Esophagus muscularis mucosa (tissue), 4 donors: ENCODE measurements at regions of chr14 and their contacts with region 1.

Region 1: DNA sequence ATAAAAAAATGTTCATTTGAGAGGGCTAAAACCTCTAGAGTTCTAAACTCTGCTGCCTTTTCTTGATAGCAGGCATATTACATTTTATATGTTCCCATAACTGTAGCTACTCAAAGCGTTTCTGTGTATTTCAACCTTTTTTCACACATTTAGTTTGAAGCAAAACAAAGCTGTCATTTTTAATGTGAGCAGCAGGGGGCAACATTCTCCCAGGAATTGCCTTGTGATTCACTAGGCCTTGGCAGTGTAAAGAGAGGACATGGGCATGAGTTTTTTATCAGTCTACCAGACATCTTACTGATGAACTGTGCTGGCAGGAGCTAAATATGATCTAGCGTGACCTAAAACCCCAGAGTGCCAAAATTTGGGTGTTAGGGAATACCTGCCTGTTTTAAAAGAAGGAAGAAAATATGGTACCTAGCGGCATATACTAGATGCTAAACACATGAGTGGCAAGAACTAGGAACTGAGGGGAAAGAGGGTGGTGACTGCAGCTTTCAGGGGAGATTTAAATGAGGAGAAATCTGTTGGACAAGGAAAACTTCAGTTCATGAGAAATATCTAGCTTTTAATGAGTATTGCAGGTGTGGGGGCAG is 65.3 kb downstream of the IFT43 start:
- DNase-seq: no peak
- H3K4me3 ChIP-seq: no peak overlapping the region
- H3K27ac ChIP-seq: no peak overlapping the region
- H3K4me1 ChIP-seq: peaks cover 0 to 8% (median 3%) of the 10 kb centered on the region in 4 donors
- H3K27me3 ChIP-seq: no peaks in the 10 kb centered on the region
- CTCF ChIP-seq: peak; percentile 72 to 79 (median 73)
- EP300 ChIP-seq: no peak
- POLR2A ChIP-seq: no peak

Region 2: DNA sequence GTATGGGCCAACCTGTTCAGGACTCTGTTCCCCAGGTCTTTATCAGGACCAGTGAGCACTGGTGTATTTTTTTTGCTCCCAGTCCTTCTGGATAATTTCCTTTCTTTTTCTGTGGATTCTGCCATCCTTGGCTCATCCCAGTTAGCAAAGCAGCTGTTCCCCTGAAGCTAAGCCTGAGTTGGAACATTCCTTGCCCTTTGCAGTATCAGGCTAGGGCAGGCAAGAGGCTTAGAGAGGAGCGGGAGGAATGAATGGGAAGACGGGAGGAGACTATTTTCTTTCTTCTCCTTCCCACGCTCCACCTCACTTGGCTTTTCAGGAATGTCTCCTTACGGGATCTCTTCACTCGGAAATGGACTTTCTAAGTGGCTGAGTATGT is 419.5 kb before region 1 on chr14:
- intact Hi-C with region 1: no loop called
- DNase-seq: no peak
- H3K4me3 ChIP-seq: no peak overlapping the region
- H3K27ac ChIP-seq: no peak overlapping the region
- H3K4me1 ChIP-seq: no peaks in the 10 kb centered on the region
- H3K27me3 ChIP-seq: no peaks in the 10 kb centered on the region
- CTCF ChIP-seq: no peak
- EP300 ChIP-seq: no peak
- POLR2A ChIP-seq: no peak

Region 3: DNA sequence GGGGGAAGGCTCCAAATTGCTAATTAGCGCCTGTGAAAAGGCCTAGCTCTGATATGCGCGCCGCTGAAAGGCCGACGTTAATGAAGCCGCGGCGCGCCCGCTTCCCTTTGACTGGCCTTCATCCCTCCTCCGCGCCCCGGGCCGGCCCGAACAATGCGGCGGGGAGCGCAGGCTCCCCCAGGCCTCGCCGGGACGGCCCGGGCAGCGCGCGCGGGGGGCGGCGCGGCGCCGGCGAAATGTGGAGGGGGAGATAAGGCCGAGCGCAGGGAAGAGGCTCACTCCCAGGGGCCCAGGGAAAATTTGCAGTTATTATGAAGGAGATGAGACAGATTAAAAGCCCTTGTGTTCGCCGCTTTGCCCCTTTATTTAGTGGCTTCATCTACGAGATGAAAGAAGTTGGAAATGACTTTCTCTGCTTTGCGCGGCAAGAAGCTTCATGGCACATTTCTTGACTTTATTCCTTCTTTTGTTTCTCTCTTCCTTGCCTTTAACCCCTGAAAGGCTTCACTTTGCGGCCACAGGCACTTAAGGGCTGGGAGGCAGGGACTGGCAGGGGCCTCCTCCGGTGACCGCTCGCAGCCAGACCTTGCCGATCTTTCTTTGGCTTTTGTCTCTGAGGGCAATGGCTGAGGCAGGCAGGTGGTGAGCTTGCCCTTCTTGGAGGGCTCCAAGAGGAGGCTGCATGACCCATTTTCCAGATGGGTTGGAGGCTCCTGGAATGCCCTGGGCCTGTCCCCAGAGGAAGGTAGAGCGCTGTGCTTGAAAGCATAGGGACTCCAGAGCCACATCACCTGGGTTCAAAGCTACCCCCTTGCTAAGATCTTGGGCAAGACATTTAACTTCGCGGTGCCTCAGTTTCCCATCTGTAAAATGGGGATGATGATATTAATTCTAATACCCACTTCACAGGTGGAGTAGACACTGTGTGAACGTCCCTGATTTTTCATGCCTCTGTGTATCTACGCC is 88.1 kb after region 1 on chr14:
- intact Hi-C with region 1: no loop called
- DNase-seq: no peak
- H3K4me3 ChIP-seq: peak overlapping the region; percentile 47 to 51 (median 48)
- H3K27ac ChIP-seq: no peak overlapping the region
- H3K4me1 ChIP-seq: peaks cover 3 to 15% (median 13%) of the 10 kb centered on the region in 4 donors
- H3K27me3 ChIP-seq: peaks cover 0 to 56% (median 8%) of the 10 kb centered on the region in 4 donors
- CTCF ChIP-seq: no peak
- EP300 ChIP-seq: no peak
- POLR2A ChIP-seq: no peak

Region 4: GRCh38 chr14:76169776-76170175 is 118.9 kb after region 1 on chr14:
- intact Hi-C with region 1: loop called (anchors 10 kb)
- DNase-seq: no peak
- H3K4me3 ChIP-seq: no peak overlapping the region
- H3K27ac ChIP-seq: no peak overlapping the region
- H3K4me1 ChIP-seq: peaks cover 4 to 25% (median 16%) of the 10 kb centered on the region in 4 donors
- H3K27me3 ChIP-seq: no peaks in the 10 kb centered on the region
- CTCF ChIP-seq: no peak
- EP300 ChIP-seq: no peak
- POLR2A ChIP-seq: no peak

Region 5: DNA sequence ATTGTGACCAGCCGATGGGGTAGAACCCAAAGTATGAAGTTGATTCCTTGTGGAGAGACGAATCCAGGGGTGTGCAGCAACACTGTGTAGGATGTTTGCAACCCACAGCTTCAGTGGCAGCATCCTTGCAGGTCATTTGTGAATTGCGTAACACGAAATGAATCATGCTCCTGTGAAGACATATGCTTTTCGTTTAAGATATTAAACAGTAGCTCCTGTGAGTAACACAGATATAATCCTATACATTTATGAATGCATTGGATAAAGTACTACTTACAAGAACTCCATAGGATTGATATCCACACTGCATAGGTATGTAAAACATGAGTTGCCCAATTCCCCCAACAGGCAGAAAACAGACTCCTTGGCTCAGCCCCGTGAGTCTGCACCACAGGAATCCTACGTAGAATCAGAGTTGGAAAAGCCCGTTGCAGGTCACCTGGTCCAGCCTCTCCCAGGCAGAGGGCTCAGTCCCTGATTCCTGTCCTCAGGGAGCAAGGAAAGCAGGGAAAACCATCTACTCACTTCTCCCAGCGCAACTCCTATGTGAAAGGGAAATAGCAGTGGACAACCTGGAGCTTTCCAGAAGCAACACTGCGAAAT is 176.7 kb after region 1 on chr14:
- intact Hi-C with region 1: no loop called
- DNase-seq: no peak
- H3K4me3 ChIP-seq: no peak overlapping the region
- H3K27ac ChIP-seq: no peak overlapping the region
- H3K4me1 ChIP-seq: no peaks in the 10 kb centered on the region
- H3K27me3 ChIP-seq: no peaks in the 10 kb centered on the region
- CTCF ChIP-seq: no peak
- EP300 ChIP-seq: no peak
- POLR2A ChIP-seq: no peak

Region 6: GRCh38 chr14:76352639-76353281 is 301.9 kb after region 1 on chr14:
- intact Hi-C with region 1: loop called (anchors 2 kb)
- DNase-seq: no peak
- H3K4me3 ChIP-seq: peak overlapping the region; percentile 40 to 52 (median 40)
- H3K27ac ChIP-seq: no peak overlapping the region
- H3K4me1 ChIP-seq: peaks cover 8 to 9% (median 8%) of the 10 kb centered on the region in 4 donors
- H3K27me3 ChIP-seq: peaks cover 0 to 38% (median 0%) of the 10 kb centered on the region in 4 donors
- CTCF ChIP-seq: peak; percentile 77 to 89 (median 86)
- EP300 ChIP-seq: no peak
- POLR2A ChIP-seq: no peak

Region 7: GRCh38 chr14:76537906-76538647 is 487.2 kb after region 1 on chr14:
- intact Hi-C with region 1: no loop called
- DNase-seq: no peak
- H3K4me3 ChIP-seq: no peak overlapping the region
- H3K27ac ChIP-seq: no peak overlapping the region
- H3K4me1 ChIP-seq: peaks cover 0 to 4% (median 0%) of the 10 kb centered on the region in 4 donors
- H3K27me3 ChIP-seq: peaks cover 0 to 41% (median 0%) of the 10 kb centered on the region in 4 donors
- CTCF ChIP-seq: no peak
- EP300 ChIP-seq: no peak
- POLR2A ChIP-seq: no peak

Region 8: GRCh38 chr14:76647697-76648298 is 596.9 kb after region 1 on chr14:
- intact Hi-C with region 1: loop called (anchors 5 kb)
- DNase-seq: no peak
- H3K4me3 ChIP-seq: no peak overlapping the region
- H3K27ac ChIP-seq: no peak overlapping the region
- H3K4me1 ChIP-seq: no peaks in the 10 kb centered on the region
- H3K27me3 ChIP-seq: peaks cover 0 to 13% (median 0%) of the 10 kb centered on the region in 4 donors
- CTCF ChIP-seq: peak; percentile 61 to 81 (median 62)
- EP300 ChIP-seq: no peak
- POLR2A ChIP-seq: no peak